ENCODE measurements at regions of chr7 and their contacts with region 1.

Region 1: DNA sequence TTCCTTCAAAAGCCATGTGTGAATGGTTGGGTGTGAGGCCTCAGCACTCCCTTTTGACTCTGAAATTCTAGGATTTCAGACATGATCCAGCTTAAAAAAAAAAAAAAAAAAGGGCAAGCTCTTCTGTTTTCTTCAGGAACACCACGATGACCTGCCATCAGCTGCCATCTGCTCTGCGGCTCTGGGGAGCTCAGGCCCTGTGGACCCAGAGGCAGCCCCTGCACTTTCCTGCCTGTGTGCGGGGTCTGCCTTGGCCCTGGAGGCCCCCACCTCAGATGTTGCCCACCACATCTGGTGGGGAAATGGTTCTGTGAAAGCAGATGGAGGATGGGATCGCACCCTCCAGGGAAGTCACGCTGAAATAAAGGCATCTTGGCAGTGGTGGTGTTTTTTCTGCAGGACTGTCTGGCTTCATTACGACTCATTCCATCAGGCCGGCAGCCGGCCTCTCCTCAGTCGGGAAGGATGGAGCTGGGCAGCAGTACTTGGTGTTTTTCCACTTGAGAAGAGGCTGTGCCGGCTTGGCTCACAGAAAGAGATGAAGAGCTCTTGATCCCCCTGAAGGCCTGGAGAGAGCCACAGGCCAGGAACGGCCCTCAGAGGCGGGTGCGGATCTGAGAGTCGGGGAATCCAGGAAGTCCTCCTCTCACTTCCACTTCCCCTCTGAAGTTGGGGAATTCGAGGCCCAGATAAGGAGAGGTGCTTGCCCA is 66.1 kb upstream of the AQP1 start:
- DNase-seq: no peak
- H3K4me3 Mint-ChIP-seq: no peak overlapping the region
- H3K27ac Mint-ChIP-seq: peak overlapping the region; percentile 7
- H3K4me1 Mint-ChIP-seq: peaks cover 9% of the 10 kb centered on the region
- H3K27me3 Mint-ChIP-seq: no peaks in the 10 kb centered on the region
- CTCF ChIP-seq: no peak

Region 2: GRCh38 chr7:29976673-29977415 is 868.7 kb before region 1 on chr7:
- CTCF ChIA-PET with region 1: no interaction called
- intact Hi-C with region 1: no loop called
- DNase-seq: no peak
- H3K4me3 Mint-ChIP-seq: no peak overlapping the region
- H3K27ac Mint-ChIP-seq: no peak overlapping the region
- H3K4me1 Mint-ChIP-seq: peaks cover 10% of the 10 kb centered on the region
- H3K27me3 Mint-ChIP-seq: no peaks in the 10 kb centered on the region
- CTCF ChIP-seq: no peak

Region 3: DNA sequence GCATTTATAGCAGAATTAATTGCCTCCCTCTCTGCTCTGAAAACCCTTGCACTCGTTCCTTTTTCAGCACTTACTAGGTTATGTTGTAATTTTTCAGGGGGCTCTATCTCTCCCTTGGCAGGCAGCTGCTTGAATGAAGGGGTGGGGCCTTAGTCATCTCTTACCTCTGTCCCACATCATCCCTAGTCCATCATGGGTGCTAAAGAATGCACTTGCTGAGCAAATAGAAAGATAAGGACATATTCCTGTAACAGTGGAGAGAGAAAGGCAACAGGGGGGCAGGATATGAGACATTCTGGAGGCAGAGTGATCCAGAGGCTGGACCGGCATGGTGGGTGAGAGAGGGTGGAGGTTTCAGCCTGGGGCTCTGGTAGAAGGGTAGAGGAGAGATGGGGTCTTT is 14.4 kb before region 1 on chr7:
- CTCF ChIA-PET with region 1: no interaction called
- intact Hi-C with region 1: no loop called
- DNase-seq: no peak
- H3K4me3 Mint-ChIP-seq: no peak overlapping the region
- H3K27ac Mint-ChIP-seq: no peak overlapping the region
- H3K4me1 Mint-ChIP-seq: no peaks in the 10 kb centered on the region
- H3K27me3 Mint-ChIP-seq: no peaks in the 10 kb centered on the region
- CTCF ChIP-seq: no peak

Region 4: DNA sequence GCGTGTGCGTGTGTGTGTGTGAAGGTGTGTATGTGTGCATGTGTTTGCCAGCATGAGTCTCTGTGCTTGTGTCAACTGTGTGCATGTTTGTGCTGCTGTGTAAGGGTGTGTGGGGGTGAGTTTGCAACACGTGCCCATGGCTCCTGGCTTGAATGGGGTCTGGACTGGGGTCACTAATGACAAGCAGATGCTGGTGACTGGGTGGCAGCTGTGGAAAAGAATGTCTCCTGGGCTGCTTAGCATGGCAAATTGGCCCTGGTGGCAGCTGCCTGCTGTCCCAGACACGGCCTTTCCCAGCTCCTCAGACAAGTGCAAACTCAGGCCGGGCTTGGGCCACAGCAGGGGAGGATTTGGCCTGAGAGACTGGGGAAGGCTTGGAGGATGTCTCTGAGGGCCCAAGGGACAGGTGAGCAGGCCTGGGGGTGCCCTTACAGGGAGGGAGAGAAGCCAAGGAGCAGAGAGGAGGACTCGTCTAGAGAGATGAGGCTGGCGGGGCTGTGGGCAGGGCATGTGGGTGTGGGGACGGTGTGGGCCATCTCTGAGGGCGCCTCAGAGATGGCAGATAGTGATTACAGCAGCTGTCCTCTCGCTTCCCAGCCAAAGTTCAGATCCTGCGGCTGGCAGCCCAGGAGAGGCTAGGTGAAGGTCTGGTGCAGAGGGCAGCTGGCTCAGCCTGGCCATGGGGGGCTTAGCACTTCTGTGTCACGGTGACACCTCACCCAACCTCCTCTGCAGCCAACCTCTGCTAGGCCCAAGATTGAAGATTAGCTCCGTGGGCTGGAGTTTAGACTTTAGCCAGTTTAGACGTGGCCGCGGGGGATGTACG is 67.6 kb after region 1 on chr7:
- CTCF ChIA-PET with region 1: interaction called, 14 read pairs
- intact Hi-C with region 1: no loop called
- DNase-seq: no peak
- H3K4me3 Mint-ChIP-seq: no peak overlapping the region
- H3K27ac Mint-ChIP-seq: peak overlapping the region; percentile 60
- H3K4me1 Mint-ChIP-seq: peaks cover 39% of the 10 kb centered on the region
- H3K27me3 Mint-ChIP-seq: no peaks in the 10 kb centered on the region
- CTCF ChIP-seq: no peak

Region 5: GRCh38 chr7:30983042-30983913 is 137.7 kb after region 1 on chr7:
- CTCF ChIA-PET with region 1: no interaction called
- intact Hi-C with region 1: no loop called
- DNase-seq: peak; percentile 96
- H3K4me3 Mint-ChIP-seq: peak overlapping the region; percentile 13
- H3K27ac Mint-ChIP-seq: no peak overlapping the region
- H3K4me1 Mint-ChIP-seq: peaks cover 30% of the 10 kb centered on the region
- H3K27me3 Mint-ChIP-seq: peaks cover 51% of the 10 kb centered on the region
- CTCF ChIP-seq: peak; percentile 97